ENCODE measurements at regions of chr5 and their contacts with region 1.

Region 1: GRCh38 chr5:130871346-130872086 is 293.5 kb downstream of the HINT1 start:
- DNase-seq: peak; percentile 2 to 66 (median 28)
- ATAC-seq: peak; percentile 59
- H3K4me3 ChIP-seq: no peak overlapping the region
- H3K4me3 Mint-ChIP-seq: no peak overlapping the region
- H3K27ac ChIP-seq: no peak overlapping the region
- H3K27ac Mint-ChIP-seq: no peak overlapping the region
- H3K4me1 ChIP-seq: no peaks in the 10 kb centered on the region
- H3K4me1 Mint-ChIP-seq: no peaks in the 10 kb centered on the region
- H3K27me3 ChIP-seq: peaks cover 0 to 3% of the 10 kb centered on the region in 2 experiments
- H3K27me3 Mint-ChIP-seq: no peaks in the 10 kb centered on the region
- CTCF ChIP-seq: peak; percentile 66

Region 2: GRCh38 chr5:130216286-130216685 is 655.2 kb before region 1 on chr5:
- CTCF ChIA-PET with region 1: no interaction called
- POLR2A ChIA-PET with region 1: no interaction called
- intact Hi-C with region 1: no loop called
- DNase-seq: no peak
- ATAC-seq: no peak
- H3K4me3 ChIP-seq: no peak overlapping the region
- H3K4me3 Mint-ChIP-seq: no peak overlapping the region
- H3K27ac ChIP-seq: no peak overlapping the region
- H3K27ac Mint-ChIP-seq: no peak overlapping the region
- H3K4me1 ChIP-seq: no peaks in the 10 kb centered on the region
- H3K4me1 Mint-ChIP-seq: no peaks in the 10 kb centered on the region
- H3K27me3 ChIP-seq: no peaks in the 10 kb centered on the region
- H3K27me3 Mint-ChIP-seq: peaks cover 8% of the 10 kb centered on the region
- CTCF ChIP-seq: no peak

Region 3: GRCh38 chr5:130923543-130924124 is 52.1 kb after region 1 on chr5:
- CTCF ChIA-PET with region 1: no interaction called
- POLR2A ChIA-PET with region 1: no interaction called
- intact Hi-C with region 1: no loop called
- DNase-seq: no peak
- ATAC-seq: no peak
- H3K4me3 ChIP-seq: no peak overlapping the region
- H3K4me3 Mint-ChIP-seq: no peak overlapping the region
- H3K27ac ChIP-seq: no peak overlapping the region
- H3K27ac Mint-ChIP-seq: no peak overlapping the region
- H3K4me1 ChIP-seq: no peaks in the 10 kb centered on the region
- H3K4me1 Mint-ChIP-seq: no peaks in the 10 kb centered on the region
- H3K27me3 ChIP-seq: no peaks in the 10 kb centered on the region
- H3K27me3 Mint-ChIP-seq: peaks cover 2% of the 10 kb centered on the region
- CTCF ChIP-seq: no peak

Region 4: GRCh38 chr5:131068893-131069643 is 197.6 kb after region 1 on chr5:
- CTCF ChIA-PET with region 1: interaction called, 10 read pairs
- POLR2A ChIA-PET with region 1: no interaction called
- intact Hi-C with region 1: loop called in 1 of 2 experiments (anchors 2 kb)
- DNase-seq: peak; percentile 12 to 82 (median 59)
- ATAC-seq: peak; percentile 98
- H3K4me3 ChIP-seq: peak overlapping the region in 1 of 2 experiments; percentile 5
- H3K4me3 Mint-ChIP-seq: peak overlapping the region; percentile 40
- H3K27ac ChIP-seq: peak overlapping the region; percentile 12 to 73
- H3K27ac Mint-ChIP-seq: peak overlapping the region; percentile 87
- H3K4me1 ChIP-seq: peaks cover 22% of the 10 kb centered on the region
- H3K4me1 Mint-ChIP-seq: peaks cover 54% of the 10 kb centered on the region
- H3K27me3 ChIP-seq: no peaks in the 10 kb centered on the region
- H3K27me3 Mint-ChIP-seq: no peaks in the 10 kb centered on the region
- CTCF ChIP-seq: peak; percentile 32

Region 5: DNA sequence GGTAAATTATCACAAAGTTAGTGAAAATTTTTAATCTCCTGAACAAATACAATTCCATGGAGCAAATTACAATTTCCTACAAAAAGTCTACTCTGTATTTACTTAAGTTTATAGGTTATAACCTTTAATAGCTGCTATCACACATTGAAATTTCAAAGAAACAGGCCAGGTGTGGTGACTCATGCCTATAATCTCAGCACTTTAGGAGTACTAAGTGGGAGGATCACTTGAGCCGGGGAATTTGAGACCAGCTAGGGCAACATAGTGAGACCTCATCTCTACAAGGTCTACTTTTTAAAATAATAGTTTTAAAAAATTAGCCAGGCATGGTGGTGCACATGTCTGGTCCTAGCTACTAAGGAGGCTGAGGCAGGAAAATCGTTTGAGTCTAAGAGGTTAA is 243.2 kb after region 1 on chr5:
- CTCF ChIA-PET with region 1: interaction called, 56 read pairs
- POLR2A ChIA-PET with region 1: no interaction called
- intact Hi-C with region 1: loop called (anchors 1 kb)
- DNase-seq: no peak
- ATAC-seq: no peak
- H3K4me3 ChIP-seq: no peak overlapping the region
- H3K4me3 Mint-ChIP-seq: no peak overlapping the region
- H3K27ac ChIP-seq: no peak overlapping the region
- H3K27ac Mint-ChIP-seq: no peak overlapping the region
- H3K4me1 ChIP-seq: peaks cover under 1% of the 10 kb centered on the region
- H3K4me1 Mint-ChIP-seq: peaks cover 2% of the 10 kb centered on the region
- H3K27me3 ChIP-seq: no peaks in the 10 kb centered on the region
- H3K27me3 Mint-ChIP-seq: no peaks in the 10 kb centered on the region
- CTCF ChIP-seq: no peak

Region 6: DNA sequence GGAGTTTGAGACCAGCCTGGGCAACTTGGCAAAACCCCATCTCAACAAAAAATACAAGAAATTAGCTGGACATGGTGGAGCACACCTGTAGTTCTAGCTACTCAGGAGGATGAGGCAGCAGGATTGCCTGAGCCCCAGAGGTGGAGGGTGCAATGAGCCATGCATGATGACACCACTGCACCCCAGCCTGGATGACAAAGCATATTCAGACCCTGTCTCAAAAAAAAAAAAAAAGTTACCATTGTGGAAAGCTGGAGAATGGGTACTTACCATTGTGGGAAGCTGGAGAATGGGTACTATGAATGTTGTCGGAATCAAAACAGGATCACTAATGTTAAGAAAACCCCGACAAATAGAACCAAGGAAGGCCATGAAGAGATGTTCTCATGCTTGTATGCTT is 267.8 kb after region 1 on chr5:
- CTCF ChIA-PET with region 1: no interaction called
- POLR2A ChIA-PET with region 1: no interaction called
- intact Hi-C with region 1: no loop called
- DNase-seq: no peak
- ATAC-seq: no peak
- H3K4me3 ChIP-seq: no peak overlapping the region
- H3K4me3 Mint-ChIP-seq: no peak overlapping the region
- H3K27ac ChIP-seq: no peak overlapping the region
- H3K27ac Mint-ChIP-seq: no peak overlapping the region
- H3K4me1 ChIP-seq: peaks cover 3% of the 10 kb centered on the region
- H3K4me1 Mint-ChIP-seq: peaks cover 17% of the 10 kb centered on the region
- H3K27me3 ChIP-seq: no peaks in the 10 kb centered on the region
- H3K27me3 Mint-ChIP-seq: no peaks in the 10 kb centered on the region
- CTCF ChIP-seq: no peak

Measured in CD8-positive, alpha-beta T cell (primary cell).